ENCODE measurements at regions of chr2 and their contacts with region 1.

Region 1: DNA sequence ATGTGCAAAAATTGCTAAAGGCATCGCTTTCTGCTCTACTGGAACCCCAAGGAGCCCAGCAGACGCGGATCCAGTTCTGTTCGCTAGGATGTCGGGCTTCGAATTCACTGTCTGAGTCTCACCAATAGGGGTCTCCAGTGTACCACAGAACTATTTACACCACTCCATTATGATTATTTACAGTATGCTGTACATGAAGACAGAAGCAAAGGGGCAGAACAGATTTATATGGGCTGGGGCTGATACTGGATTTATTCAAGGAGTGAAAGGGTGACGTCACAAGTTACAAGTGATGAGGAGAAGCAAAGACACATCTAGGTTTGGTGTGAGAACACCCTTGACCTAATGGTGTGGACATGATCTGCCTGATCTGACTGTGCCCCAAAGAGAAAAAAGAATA is 185.3 kb upstream of the ATP5MC3 start:
- DNase-seq: no peak
- ATAC-seq: peak; percentile 53 to 55

Region 2: DNA sequence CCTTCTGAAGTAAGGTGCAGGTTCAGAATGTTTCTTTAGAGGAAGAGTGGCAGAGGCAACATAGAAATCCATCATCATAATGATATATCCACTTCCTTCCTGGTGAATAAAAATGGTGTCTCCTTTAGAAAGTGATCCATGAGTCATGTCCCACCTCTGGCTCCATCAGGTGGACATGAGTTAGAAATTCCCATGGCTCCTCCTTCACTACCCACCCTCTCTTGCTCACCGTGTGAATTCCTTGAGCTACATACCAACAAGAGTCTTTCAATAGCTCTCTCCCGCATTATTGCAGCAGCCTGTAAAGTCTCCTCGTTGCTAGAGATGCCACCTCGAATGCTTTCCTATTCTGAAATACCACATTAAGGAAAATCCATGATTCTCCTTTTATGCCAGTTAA is 317.6 kb after region 1 on chr2:
- intact Hi-C with region 1: loop called in 1 of 2 experiments (anchors 10 kb)
- DNase-seq: no peak
- ATAC-seq: no peak